ENCODE measurements at regions of chr12 and their contacts with region 1.

Region 1: DNA sequence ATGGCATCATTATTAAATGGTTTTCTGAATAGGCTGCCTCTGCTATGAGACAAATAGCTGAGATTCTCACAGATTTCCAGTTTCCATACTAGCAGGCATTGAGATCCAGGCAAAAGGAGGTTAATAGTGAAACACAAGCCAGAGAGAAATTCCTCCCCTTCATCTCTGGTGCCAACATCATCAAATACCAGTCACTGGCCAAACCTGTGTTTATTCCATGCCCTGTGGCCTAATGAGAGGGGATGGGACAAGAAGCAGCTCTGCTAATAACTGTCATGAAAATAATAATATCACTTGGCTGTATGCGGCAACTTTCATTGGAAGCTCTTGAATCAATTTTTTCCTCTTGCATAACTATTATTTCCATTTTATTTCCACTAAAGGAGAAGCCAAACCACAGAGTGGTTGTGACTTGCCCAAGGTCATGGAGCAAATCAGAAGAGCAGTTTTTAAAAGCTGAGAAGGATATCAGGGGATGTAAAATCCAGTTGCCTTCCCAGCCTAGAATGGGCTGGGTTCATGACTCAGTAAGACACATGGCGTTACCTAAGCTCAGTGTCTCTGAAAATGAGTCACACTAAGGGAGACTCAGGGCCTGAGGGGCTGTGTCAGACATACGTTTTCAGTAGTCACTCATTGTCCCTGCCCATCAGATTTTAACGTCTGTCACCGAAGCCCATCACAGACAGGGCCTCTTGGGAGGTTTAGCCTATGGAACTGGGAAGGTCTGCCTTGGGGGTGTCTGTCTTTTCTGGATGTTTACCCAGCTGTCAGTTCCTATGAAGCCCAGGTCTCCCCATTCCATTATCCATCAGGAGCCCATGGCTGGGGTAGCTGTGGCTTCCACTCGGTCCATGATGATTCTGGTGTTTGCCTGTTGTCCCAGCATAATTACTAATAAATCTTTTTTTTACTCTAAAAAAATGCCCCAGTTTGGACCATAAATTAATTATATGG is 208.8 kb upstream of the EEA1 start:
- DNase-seq: no peak
- ATAC-seq: peak; percentile 77
- H3K4me3 ChIP-seq: no peak overlapping the region
- H3K27ac ChIP-seq: peak overlapping the region; percentile 59; the same call in 1 of the 2 replicates
- H3K4me1 ChIP-seq: peaks cover 45% of the 10 kb centered on the region
- H3K27me3 ChIP-seq: no peaks in the 10 kb centered on the region
- CTCF ChIP-seq: no peak
- EP300 ChIP-seq: no peak; a peak in 1 of 4 replicates
- POLR2A ChIP-seq: no peak
- RAD21 ChIP-seq: no peak

Region 2: DNA sequence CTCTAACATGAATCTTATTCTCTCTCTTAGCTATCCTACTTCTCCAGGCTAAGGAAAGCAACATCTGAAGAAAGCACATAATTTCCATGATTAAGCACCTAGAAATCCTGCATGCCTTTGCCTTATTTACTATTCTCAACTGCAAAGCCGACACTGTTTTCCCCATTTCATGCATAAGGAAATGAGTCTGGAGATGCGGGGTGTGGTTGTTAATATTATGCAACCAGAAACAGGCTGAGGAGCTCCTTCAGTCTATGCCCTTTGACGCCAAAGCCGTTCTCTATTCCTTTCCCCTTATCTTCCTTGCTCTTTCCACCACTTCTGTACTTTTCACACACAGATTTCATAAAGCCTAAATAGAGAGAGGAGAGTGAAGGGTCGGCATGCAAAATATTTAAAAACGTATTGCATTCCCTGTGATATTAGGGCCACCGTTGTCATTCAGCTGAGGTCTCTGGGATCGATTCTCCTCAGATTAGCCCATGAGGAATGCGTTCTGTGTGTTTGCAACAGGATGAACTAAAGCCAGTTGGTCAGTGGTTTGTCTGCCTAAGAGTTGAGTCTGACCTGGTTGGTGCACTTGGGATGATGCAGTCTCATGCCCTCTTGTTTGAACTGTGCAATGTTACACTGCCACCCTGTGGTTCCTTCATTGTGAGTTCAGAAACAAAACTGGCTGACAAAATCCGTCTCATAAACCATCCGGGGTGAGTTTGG is 488.3 kb before region 1 on chr12:
- CTCF ChIA-PET with region 1: no interaction called
- POLR2A ChIA-PET with region 1: no interaction called
- RAD21 ChIA-PET with region 1: no interaction called
- SMC1A ChIA-PET with region 1: no interaction called
- in situ Hi-C with region 1: no loop called
- intact Hi-C with region 1: no loop called
- DNase-seq: peak; percentile 67
- ATAC-seq: peak; percentile 98
- H3K4me3 ChIP-seq: no peak overlapping the region
- H3K27ac ChIP-seq: no peak overlapping the region
- H3K4me1 ChIP-seq: no peaks in the 10 kb centered on the region
- H3K27me3 ChIP-seq: no peaks in the 10 kb centered on the region
- CTCF ChIP-seq: peak; percentile 72 to 85 (median 76); a peak in 5 of 6 replicates
- EP300 ChIP-seq: no peak
- POLR2A ChIP-seq: no peak
- RAD21 ChIP-seq: peak; percentile 96

Region 3: GRCh38 chr12:93008044-93008778 is 129.7 kb before region 1 on chr12:
- CTCF ChIA-PET with region 1: interaction called, 5 read pairs
- POLR2A ChIA-PET with region 1: interaction called, 6 read pairs
- RAD21 ChIA-PET with region 1: interaction called, 6 read pairs
- SMC1A ChIA-PET with region 1: interaction called, 31 read pairs
- in situ Hi-C with region 1: no loop called
- intact Hi-C with region 1: no loop called
- DNase-seq: no peak
- ATAC-seq: peak; percentile 92
- H3K4me3 ChIP-seq: no peak overlapping the region
- H3K27ac ChIP-seq: peak overlapping the region; percentile 45
- H3K4me1 ChIP-seq: peaks cover 36% of the 10 kb centered on the region
- H3K27me3 ChIP-seq: no peaks in the 10 kb centered on the region
- CTCF ChIP-seq: no peak
- EP300 ChIP-seq: no peak
- POLR2A ChIP-seq: no peak
- RAD21 ChIP-seq: no peak

Region 4: DNA sequence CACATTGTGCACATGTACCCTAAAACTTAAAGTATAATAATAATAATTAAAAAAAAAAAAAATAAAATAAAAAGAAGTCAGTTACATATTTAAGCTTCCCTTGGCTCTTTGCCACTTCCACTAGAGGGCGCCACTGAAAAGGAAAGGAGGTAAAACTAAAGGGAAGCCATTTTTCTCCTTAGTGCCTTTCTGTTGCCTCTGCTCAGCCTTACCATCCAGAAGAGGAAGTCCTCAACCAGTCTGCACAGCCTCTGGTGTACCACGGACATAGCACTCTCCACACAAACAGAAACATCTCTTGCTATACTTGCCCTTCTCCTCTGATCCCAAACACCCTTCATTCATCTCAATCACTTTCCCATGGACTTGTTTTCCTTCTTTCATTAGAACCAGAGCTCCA is 39.9 kb before region 1 on chr12:
- CTCF ChIA-PET with region 1: interaction called, 120 read pairs
- POLR2A ChIA-PET with region 1: interaction called, 10 read pairs
- RAD21 ChIA-PET with region 1: interaction called, 130 read pairs
- SMC1A ChIA-PET with region 1: interaction called, 133 read pairs
- in situ Hi-C with region 1: no loop called
- intact Hi-C with region 1: loop called (anchors 5 kb)
- DNase-seq: peak; percentile 51
- ATAC-seq: peak; percentile 80
- H3K4me3 ChIP-seq: no peak overlapping the region
- H3K27ac ChIP-seq: no peak overlapping the region
- H3K4me1 ChIP-seq: peaks cover 20% of the 10 kb centered on the region
- H3K27me3 ChIP-seq: no peaks in the 10 kb centered on the region
- CTCF ChIP-seq: peak; percentile 36 to 54 (median 52)
- EP300 ChIP-seq: no peak
- POLR2A ChIP-seq: no peak
- RAD21 ChIP-seq: peak; percentile 80

Region 5: DNA sequence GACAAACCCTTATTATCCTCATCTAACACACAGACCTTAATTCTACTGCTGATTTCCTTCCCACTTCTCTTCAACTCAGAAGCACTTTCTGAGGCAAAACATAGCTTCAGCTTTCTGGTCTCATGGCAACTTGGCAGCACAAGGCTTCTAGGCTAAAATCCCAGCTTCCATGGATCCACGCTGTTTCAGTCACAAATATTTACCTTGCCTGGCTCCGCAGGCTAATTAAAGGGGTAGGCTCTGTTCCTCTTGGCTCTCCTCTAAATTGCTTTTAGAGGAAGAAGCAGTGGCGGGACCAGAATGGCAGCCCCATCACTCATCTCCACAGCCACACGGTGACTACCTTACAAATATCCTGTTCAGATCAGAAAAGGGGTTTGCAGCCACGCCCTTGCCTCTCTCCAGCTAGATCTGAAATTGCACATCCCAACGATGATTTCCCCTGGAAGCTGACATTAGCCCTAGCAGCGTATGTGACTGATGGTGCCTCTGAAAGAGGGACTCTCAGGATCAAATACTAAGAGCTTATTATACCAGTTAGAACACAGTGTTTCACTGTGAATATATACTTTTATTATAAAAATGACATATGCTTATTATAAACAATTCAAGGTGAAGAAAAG is 18.3 kb after region 1 on chr12:
- CTCF ChIA-PET with region 1: interaction called, 8 read pairs
- POLR2A ChIA-PET with region 1: interaction called, 4 read pairs
- RAD21 ChIA-PET with region 1: interaction called, 13 read pairs
- SMC1A ChIA-PET with region 1: interaction called, 50 read pairs
- in situ Hi-C with region 1: no loop called
- intact Hi-C with region 1: no loop called
- DNase-seq: no peak
- ATAC-seq: no peak
- H3K4me3 ChIP-seq: no peak overlapping the region
- H3K27ac ChIP-seq: no peak overlapping the region
- H3K4me1 ChIP-seq: no peaks in the 10 kb centered on the region
- H3K27me3 ChIP-seq: no peaks in the 10 kb centered on the region
- CTCF ChIP-seq: no peak
- EP300 ChIP-seq: no peak
- POLR2A ChIP-seq: no peak
- RAD21 ChIP-seq: no peak

Region 6: GRCh38 chr12:93200291-93200917 is 62.5 kb after region 1 on chr12:
- CTCF ChIA-PET with region 1: interaction called, 3 read pairs
- POLR2A ChIA-PET with region 1: no interaction called
- RAD21 ChIA-PET with region 1: interaction called, 8 read pairs
- SMC1A ChIA-PET with region 1: interaction called, 12 read pairs
- in situ Hi-C with region 1: no loop called
- intact Hi-C with region 1: no loop called
- DNase-seq: peak; percentile 32
- ATAC-seq: peak; percentile 90
- H3K4me3 ChIP-seq: no peak overlapping the region
- H3K27ac ChIP-seq: no peak overlapping the region
- H3K4me1 ChIP-seq: peaks cover 14% of the 10 kb centered on the region
- H3K27me3 ChIP-seq: no peaks in the 10 kb centered on the region
- CTCF ChIP-seq: no peak
- EP300 ChIP-seq: 0 out of 4 replicates have a peak, but pooled peaks of 1 of the 2 experiments have one; percentile 19
- POLR2A ChIP-seq: no peak
- RAD21 ChIP-seq: no peak

Region 7: GRCh38 chr12:93363841-93364297 is 225.9 kb after region 1 on chr12:
- CTCF ChIA-PET with region 1: interaction called, 3 read pairs
- POLR2A ChIA-PET with region 1: interaction called, 3 read pairs
- RAD21 ChIA-PET with region 1: interaction called, 10 read pairs
- SMC1A ChIA-PET with region 1: interaction called, 7 read pairs
- in situ Hi-C with region 1: no loop called
- intact Hi-C with region 1: no loop called
- DNase-seq: no peak
- ATAC-seq: peak; percentile 96
- H3K4me3 ChIP-seq: no peak overlapping the region
- H3K27ac ChIP-seq: no peak overlapping the region; the same call in 1 of the 2 replicates
- H3K4me1 ChIP-seq: peaks cover 16% of the 10 kb centered on the region
- H3K27me3 ChIP-seq: no peaks in the 10 kb centered on the region
- CTCF ChIP-seq: no peak
- EP300 ChIP-seq: no peak
- POLR2A ChIP-seq: no peak
- RAD21 ChIP-seq: no peak

Region 8: DNA sequence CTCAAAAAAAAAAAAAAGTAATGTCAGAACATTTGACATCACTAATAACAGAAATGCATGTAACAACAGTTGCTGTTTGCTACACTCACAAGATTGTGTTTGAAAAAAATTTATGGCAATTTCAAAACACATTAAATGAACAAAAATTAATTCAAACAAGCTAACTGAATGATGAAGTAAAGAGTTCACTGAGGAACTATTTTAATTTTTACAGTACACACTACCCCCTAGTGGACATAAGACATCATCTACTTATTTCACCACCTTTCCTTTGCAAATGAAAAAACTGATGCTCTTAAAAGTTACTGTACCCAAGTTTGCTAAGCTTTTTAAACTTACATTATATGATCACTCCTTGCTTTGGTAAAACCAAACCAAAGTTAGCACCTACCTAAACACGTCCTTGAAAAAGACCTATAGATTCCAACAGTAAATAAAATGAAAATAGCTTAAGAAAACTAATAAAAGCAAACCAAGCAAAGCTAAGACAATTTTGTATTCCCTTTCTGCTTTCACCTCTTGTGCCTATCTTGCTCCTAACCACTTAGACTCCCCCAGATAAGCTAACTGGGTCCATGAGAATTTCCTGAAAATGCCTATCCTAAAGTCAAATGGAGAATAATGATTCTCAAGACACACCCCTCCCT is 281.6 kb after region 1 on chr12:
- CTCF ChIA-PET with region 1: interaction called, 19 read pairs
- POLR2A ChIA-PET with region 1: interaction called, 5 read pairs
- RAD21 ChIA-PET with region 1: interaction called, 10 read pairs
- SMC1A ChIA-PET with region 1: interaction called, 36 read pairs
- in situ Hi-C with region 1: no loop called
- intact Hi-C with region 1: no loop called
- DNase-seq: no peak
- ATAC-seq: peak; percentile 54
- H3K4me3 ChIP-seq: no peak overlapping the region
- H3K27ac ChIP-seq: no peak overlapping the region
- H3K4me1 ChIP-seq: peaks cover 83% of the 10 kb centered on the region
- H3K27me3 ChIP-seq: no peaks in the 10 kb centered on the region
- CTCF ChIP-seq: peak; percentile 48 to 58 (median 54); a peak in 5 of 6 replicates
- EP300 ChIP-seq: no peak
- POLR2A ChIP-seq: no peak
- RAD21 ChIP-seq: peak; percentile 46; the same call in 1 of the 2 replicates